ENCODE measurements at regions of chr15 and their contacts with region 1.

Region 1: DNA sequence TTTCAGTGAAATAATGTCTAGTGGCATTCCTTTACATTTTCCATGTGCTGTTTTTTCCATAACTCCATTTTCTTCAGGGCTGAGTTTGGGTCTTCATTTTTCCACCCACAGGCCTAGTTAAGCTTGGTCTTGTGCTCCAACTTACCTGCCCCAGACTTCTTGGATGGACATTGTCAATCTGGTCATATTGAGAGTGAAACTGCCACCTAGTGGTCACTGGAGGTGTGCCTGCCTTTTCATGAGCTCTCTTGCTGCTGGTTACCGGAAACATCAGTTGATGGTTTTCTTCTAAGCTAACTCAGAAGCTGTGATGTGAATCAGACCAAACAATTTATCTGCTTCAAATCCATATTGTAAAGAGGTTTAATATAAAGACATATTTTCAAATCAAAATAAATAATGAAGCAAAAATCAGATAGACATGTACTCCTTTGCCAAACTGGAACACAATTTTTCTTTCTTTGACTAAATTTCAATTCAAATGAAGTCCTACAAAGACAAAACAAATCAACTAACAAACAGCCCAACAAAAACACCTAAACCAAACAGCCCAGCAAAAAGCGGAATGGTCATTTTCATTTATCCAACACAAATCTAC is 135.1 kb upstream of the RASGRP1 start:
- DNase-seq: peak in 34 of 35 experiments; percentile 31 to 88 (median 60)
- ATAC-seq: peak; percentile 48 to 68 (median 52)
- H3K4me3 ChIP-seq: no peak overlapping the region
- H3K4me3 Mint-ChIP-seq: peak overlapping the region in 2 of 3 donors; percentile 6 to 24
- H3K27ac ChIP-seq: no peak overlapping the region
- H3K27ac Mint-ChIP-seq: peak overlapping the region; percentile 75 to 84
- H3K4me1 ChIP-seq: peaks cover 10 to 46% of the 10 kb centered on the region in 2 experiments
- H3K4me1 Mint-ChIP-seq: peaks cover 54 to 61% (median 55%) of the 10 kb centered on the region in 3 donors
- H3K27me3 ChIP-seq: no peaks in the 10 kb centered on the region
- H3K27me3 Mint-ChIP-seq: no peaks in the 10 kb centered on the region

Region 2: DNA sequence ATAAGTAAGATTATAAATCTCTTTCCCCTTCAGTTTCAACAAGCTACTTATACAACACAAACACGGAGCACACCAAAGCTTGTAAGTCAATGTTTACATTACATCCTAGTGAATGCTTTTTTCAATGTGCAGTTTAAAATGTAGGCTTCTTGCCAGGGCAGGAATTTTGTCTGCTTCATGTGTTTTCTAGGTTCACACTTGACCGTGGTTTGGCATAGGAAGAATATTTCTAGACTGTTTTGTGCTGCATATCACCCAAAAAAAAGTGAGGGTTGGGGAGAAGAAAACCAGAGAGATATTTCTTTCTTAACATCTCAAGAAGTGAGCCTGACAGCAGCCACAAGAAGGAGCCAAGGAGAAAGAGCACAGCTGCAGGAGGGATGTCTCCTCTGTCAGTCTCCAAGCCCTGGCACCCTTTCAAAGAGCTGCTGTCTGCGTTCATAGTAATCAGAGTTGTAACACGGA is 1855.2 kb before region 1 on chr15:
- CTCF ChIA-PET with region 1: no interaction called
- POLR2A ChIA-PET with region 1: no interaction called
- DNase-seq: no peak
- ATAC-seq: no peak
- H3K4me3 ChIP-seq: no peak overlapping the region
- H3K4me3 Mint-ChIP-seq: no peak overlapping the region
- H3K27ac ChIP-seq: no peak overlapping the region
- H3K27ac Mint-ChIP-seq: no peak overlapping the region
- H3K4me1 ChIP-seq: no peaks in the 10 kb centered on the region
- H3K4me1 Mint-ChIP-seq: no peaks in the 10 kb centered on the region
- H3K27me3 ChIP-seq: peaks cover 0 to 2% of the 10 kb centered on the region in 2 experiments
- H3K27me3 Mint-ChIP-seq: peaks cover 3 to 29% of the 10 kb centered on the region in 2 donors

Region 3: GRCh38 chr15:38453971-38454695 is 245.6 kb before region 1 on chr15 and contains the start of gene FAM98B:
- CTCF ChIA-PET with region 1: interaction called, 4 to 12 read pairs
- POLR2A ChIA-PET with region 1: interaction called in 1 of 2 experiments, 3 read pairs
- DNase-seq: peak; percentile 69 to 92 (median 79)
- ATAC-seq: peak; percentile 85 to 91 (median 88)
- H3K4me3 ChIP-seq: peak within 1 kb of the TSS; percentile 88 to 93
- H3K4me3 Mint-ChIP-seq: peak within 1 kb of the TSS; percentile 95 to 98 (median 96)
- H3K27ac ChIP-seq: peak within 1 kb of the TSS; percentile 88
- H3K27ac Mint-ChIP-seq: peak within 1 kb of the TSS; percentile 93 to 94
- H3K4me1 ChIP-seq: peaks cover 5 to 8% of the 10 kb centered on the region in 2 experiments
- H3K4me1 Mint-ChIP-seq: peaks cover 39 to 44% (median 42%) of the 10 kb centered on the region in 3 donors
- H3K27me3 ChIP-seq: no peaks in the 10 kb centered on the region
- H3K27me3 Mint-ChIP-seq: no peaks in the 10 kb centered on the region
- total RNA-seq, gene FAM98B: 15.1 to 24.4 (median 20.6) TPM

Region 4: DNA sequence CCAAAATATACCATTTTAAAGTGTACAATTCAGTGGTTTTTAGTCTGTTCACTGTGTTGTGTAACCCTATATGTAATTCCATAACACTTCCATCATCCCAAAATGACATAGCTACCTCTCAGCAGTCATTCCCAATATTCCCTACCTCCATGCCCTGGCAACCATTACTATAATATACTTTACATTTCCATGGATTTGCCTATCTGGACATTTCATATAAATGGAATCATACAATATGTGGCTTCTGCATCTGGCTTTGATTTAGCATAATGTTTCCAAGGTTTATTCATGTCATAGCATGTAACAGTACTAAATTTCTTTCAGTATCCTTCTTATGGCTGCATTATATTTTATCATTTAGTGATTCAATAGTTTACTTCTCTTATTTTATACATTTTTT is 220.5 kb before region 1 on chr15:
- CTCF ChIA-PET with region 1: interaction called, 9 to 40 read pairs
- POLR2A ChIA-PET with region 1: interaction called in 1 of 2 experiments, 3 read pairs
- DNase-seq: no peak
- ATAC-seq: no peak
- H3K4me3 ChIP-seq: no peak overlapping the region
- H3K4me3 Mint-ChIP-seq: no peak overlapping the region
- H3K27ac ChIP-seq: no peak overlapping the region
- H3K27ac Mint-ChIP-seq: peak overlapping the region; percentile 28 to 68
- H3K4me1 ChIP-seq: peaks cover 0 to 11% of the 10 kb centered on the region in 2 experiments
- H3K4me1 Mint-ChIP-seq: peaks cover 38 to 50% (median 43%) of the 10 kb centered on the region in 3 donors
- H3K27me3 ChIP-seq: no peaks in the 10 kb centered on the region
- H3K27me3 Mint-ChIP-seq: no peaks in the 10 kb centered on the region

Region 5: DNA sequence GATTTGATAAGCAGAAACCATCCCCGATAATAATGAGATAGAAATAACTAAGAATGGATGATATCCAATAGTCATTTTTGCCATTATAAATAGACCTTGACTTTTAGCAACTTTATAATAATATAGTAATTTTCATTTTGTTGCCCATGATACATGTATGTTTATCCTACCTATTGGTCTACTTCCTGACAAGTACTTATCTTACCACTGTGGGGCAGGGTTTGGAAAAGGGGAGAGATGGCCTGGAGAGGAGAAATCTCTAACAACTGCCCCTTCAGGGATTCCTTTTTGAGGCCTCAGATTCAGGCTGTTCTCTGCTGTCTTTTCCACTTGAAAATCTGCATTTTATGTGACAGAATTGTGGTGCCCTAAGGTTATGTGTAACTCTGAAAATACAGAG is 203.6 kb before region 1 on chr15:
- CTCF ChIA-PET with region 1: interaction called in 1 of 2 experiments, 16 read pairs
- POLR2A ChIA-PET with region 1: interaction called, 3 to 4 read pairs
- DNase-seq: no peak
- ATAC-seq: no peak
- H3K4me3 ChIP-seq: no peak overlapping the region
- H3K4me3 Mint-ChIP-seq: no peak overlapping the region
- H3K27ac ChIP-seq: peak overlapping the region; percentile 21
- H3K27ac Mint-ChIP-seq: peak overlapping the region; percentile 80 to 82
- H3K4me1 ChIP-seq: no peaks in the 10 kb centered on the region
- H3K4me1 Mint-ChIP-seq: peaks cover 10 to 37% (median 27%) of the 10 kb centered on the region in 3 donors
- H3K27me3 ChIP-seq: no peaks in the 10 kb centered on the region
- H3K27me3 Mint-ChIP-seq: no peaks in the 10 kb centered on the region

Region 6: DNA sequence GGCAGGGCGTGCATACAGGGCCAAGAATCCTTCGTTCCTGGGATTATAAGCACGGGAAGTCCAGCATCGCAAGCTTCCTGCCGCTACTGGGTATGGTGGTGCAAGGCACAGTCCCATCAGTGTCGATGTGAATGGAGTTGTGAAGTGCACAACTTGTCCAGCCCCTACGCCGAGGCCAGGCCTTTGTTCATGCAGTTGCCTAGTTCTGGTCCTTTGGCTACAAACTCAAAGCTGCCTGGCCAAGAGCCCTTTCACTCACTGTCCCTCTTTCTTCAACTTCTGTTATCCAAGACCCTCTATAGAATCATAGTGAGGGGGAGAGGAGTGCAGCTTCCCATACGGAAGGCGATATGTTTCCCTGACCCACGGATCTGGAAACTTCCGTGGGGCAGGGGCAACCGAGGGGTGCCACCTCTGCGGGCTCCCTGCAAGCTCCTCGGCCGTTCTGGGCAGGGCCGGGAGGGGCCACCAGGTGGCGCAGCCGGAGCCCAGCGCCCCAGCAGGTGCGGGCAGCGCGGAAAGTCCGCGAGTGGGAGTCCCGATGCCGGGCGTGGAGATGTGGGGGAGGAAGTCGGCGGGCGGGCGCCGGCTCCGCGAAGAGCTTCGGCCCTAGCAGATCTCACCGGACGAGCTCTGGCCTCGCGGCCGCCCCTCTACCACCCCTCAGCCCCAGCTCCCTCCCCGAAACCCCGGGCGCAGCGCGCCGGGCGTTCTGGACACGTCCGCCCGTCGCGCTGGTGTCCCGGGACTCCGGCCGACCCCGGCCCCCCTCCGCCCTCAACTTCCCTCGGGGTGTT is 135.8 kb before region 1 on chr15:
- CTCF ChIA-PET with region 1: interaction called, 12 to 36 read pairs
- POLR2A ChIA-PET with region 1: interaction called in 1 of 2 experiments, 4 read pairs
- DNase-seq: peak; percentile 65 to 92 (median 82)
- ATAC-seq: peak; percentile 75 to 77 (median 76)
- H3K4me3 ChIP-seq: peak overlapping the region; percentile 90
- H3K4me3 Mint-ChIP-seq: peak overlapping the region; percentile 87 to 96 (median 88)
- H3K27ac ChIP-seq: peak overlapping the region; percentile 83
- H3K27ac Mint-ChIP-seq: peak overlapping the region; percentile 94 to 98
- H3K4me1 ChIP-seq: peaks cover 40 to 51% of the 10 kb centered on the region in 2 experiments
- H3K4me1 Mint-ChIP-seq: peaks cover 58 to 65% (median 64%) of the 10 kb centered on the region in 3 donors
- H3K27me3 ChIP-seq: no peaks in the 10 kb centered on the region
- H3K27me3 Mint-ChIP-seq: no peaks in the 10 kb centered on the region

Region 7: DNA sequence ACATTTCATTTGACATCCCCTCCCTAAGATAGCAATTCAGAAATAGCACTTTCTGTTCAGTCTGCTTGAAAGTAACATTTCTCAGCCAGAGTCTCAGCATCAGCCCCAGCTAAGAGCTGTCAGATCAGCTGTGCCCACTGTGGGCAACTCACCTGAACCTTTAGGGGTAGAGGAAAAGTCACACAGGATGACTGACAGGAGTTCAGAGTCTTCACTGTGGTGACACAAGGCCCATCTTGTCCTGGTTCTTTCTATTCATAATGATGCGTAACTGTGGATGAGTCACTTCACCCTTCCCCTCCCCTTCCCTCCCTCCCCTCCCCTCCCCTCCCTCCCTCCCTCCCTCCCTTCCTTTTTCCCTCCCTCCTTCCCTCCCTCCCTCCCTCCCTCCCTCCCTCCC is 39.0 kb before region 1 on chr15:
- CTCF ChIA-PET with region 1: interaction called, 4 to 6 read pairs
- POLR2A ChIA-PET with region 1: interaction called in 1 of 2 experiments, 14 read pairs
- DNase-seq: peak in 7 of 35 experiments; percentile 5 to 40 (median 20)
- ATAC-seq: peak; percentile 44 to 63 (median 58)
- H3K4me3 ChIP-seq: no peak overlapping the region
- H3K4me3 Mint-ChIP-seq: peak overlapping the region in 2 of 3 donors; percentile 29 to 59
- H3K27ac ChIP-seq: peak overlapping the region; percentile 48
- H3K27ac Mint-ChIP-seq: peak overlapping the region; percentile 90 to 92
- H3K4me1 ChIP-seq: peaks cover 32 to 52% of the 10 kb centered on the region in 2 experiments
- H3K4me1 Mint-ChIP-seq: peaks cover 70 to 74% (median 73%) of the 10 kb centered on the region in 3 donors
- H3K27me3 ChIP-seq: no peaks in the 10 kb centered on the region
- H3K27me3 Mint-ChIP-seq: no peaks in the 10 kb centered on the region

Region 8: GRCh38 chr15:39453500-39454073 is 753.9 kb after region 1 on chr15:
- CTCF ChIA-PET with region 1: no interaction called
- POLR2A ChIA-PET with region 1: no interaction called
- DNase-seq: no peak
- ATAC-seq: no peak
- H3K4me3 ChIP-seq: no peak overlapping the region
- H3K4me3 Mint-ChIP-seq: no peak overlapping the region
- H3K27ac ChIP-seq: no peak overlapping the region
- H3K27ac Mint-ChIP-seq: no peak overlapping the region
- H3K4me1 ChIP-seq: no peaks in the 10 kb centered on the region
- H3K4me1 Mint-ChIP-seq: no peaks in the 10 kb centered on the region
- H3K27me3 ChIP-seq: no peaks in the 10 kb centered on the region
- H3K27me3 Mint-ChIP-seq: peaks cover 5 to 9% of the 10 kb centered on the region in 2 donors